ENCODE measurements at regions of chr10 and their contacts with region 1.

Region 1: DNA sequence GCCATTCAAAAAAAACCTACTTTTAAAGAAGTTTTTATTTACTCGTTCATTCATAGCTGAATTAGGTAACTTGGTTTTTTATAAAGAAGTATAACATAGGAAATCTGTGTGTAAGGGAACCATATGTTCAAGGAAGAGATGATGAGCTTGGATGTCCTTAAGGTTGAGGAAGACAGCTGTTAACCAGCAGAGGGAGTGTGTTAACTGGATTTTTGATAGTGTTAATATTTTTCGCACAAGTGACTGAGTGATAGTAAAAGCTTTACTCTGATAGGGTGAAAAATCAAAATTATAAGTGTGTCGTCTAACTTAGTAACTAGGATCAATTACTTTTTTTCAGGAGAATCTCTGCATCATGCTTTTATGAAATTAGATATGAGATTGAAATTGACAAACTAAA is 134.7 kb downstream of the ARL5B start:
- DNase-seq: peak in 1 of 2 experiments; percentile 33
- H3K4me3 ChIP-seq: no peak overlapping the region
- H3K4me3 Mint-ChIP-seq: no peak overlapping the region
- H3K27ac Mint-ChIP-seq: no peak overlapping the region
- H3K4me1 ChIP-seq: no peaks in the 10 kb centered on the region
- H3K4me1 Mint-ChIP-seq: no peaks in the 10 kb centered on the region
- H3K27me3 ChIP-seq: no peaks in the 10 kb centered on the region
- H3K27me3 Mint-ChIP-seq: peaks cover 4% of the 10 kb centered on the region
- CTCF ChIP-seq: peak; percentile 62 to 71

Region 2: GRCh38 chr10:18607503-18608378 is 186.2 kb before region 1 on chr10:
- CTCF ChIA-PET with region 1: no interaction called
- POLR2A ChIA-PET with region 1: no interaction called
- intact Hi-C with region 1: no loop called
- DNase-seq: no peak
- H3K4me3 ChIP-seq: no peak overlapping the region
- H3K4me3 Mint-ChIP-seq: no peak overlapping the region
- H3K27ac Mint-ChIP-seq: no peak overlapping the region
- H3K4me1 ChIP-seq: peaks cover 47% of the 10 kb centered on the region
- H3K4me1 Mint-ChIP-seq: peaks cover 54% of the 10 kb centered on the region
- H3K27me3 ChIP-seq: no peaks in the 10 kb centered on the region
- H3K27me3 Mint-ChIP-seq: no peaks in the 10 kb centered on the region
- CTCF ChIP-seq: no peak

Region 3: GRCh38 chr10:19028621-19029020 is 234.7 kb after region 1 on chr10:
- CTCF ChIA-PET with region 1: no interaction called
- POLR2A ChIA-PET with region 1: no interaction called
- intact Hi-C with region 1: loop called (anchors 1 kb)
- DNase-seq: no peak
- H3K4me3 ChIP-seq: no peak overlapping the region
- H3K4me3 Mint-ChIP-seq: no peak overlapping the region
- H3K27ac Mint-ChIP-seq: no peak overlapping the region
- H3K4me1 ChIP-seq: no peaks in the 10 kb centered on the region; the same call in 1 of the 2 replicates
- H3K4me1 Mint-ChIP-seq: peaks cover 6% of the 10 kb centered on the region
- H3K27me3 ChIP-seq: no peaks in the 10 kb centered on the region
- H3K27me3 Mint-ChIP-seq: no peaks in the 10 kb centered on the region
- CTCF ChIP-seq: no peak

Region 4: GRCh38 chr10:19168584-19168983 is 374.6 kb after region 1 on chr10:
- CTCF ChIA-PET with region 1: interaction called, 7 read pairs
- POLR2A ChIA-PET with region 1: no interaction called
- intact Hi-C with region 1: loop called (anchors 1 kb)
- DNase-seq: peak; percentile 36 to 37
- H3K4me3 ChIP-seq: no peak overlapping the region
- H3K4me3 Mint-ChIP-seq: no peak overlapping the region
- H3K27ac Mint-ChIP-seq: no peak overlapping the region
- H3K4me1 ChIP-seq: no peaks in the 10 kb centered on the region
- H3K4me1 Mint-ChIP-seq: peaks cover 5% of the 10 kb centered on the region
- H3K27me3 ChIP-seq: no peaks in the 10 kb centered on the region
- H3K27me3 Mint-ChIP-seq: no peaks in the 10 kb centered on the region
- CTCF ChIP-seq: peak; percentile 51 to 61